ENCODE measurements at regions of chr18 and their contacts with region 1.

Region 1: DNA sequence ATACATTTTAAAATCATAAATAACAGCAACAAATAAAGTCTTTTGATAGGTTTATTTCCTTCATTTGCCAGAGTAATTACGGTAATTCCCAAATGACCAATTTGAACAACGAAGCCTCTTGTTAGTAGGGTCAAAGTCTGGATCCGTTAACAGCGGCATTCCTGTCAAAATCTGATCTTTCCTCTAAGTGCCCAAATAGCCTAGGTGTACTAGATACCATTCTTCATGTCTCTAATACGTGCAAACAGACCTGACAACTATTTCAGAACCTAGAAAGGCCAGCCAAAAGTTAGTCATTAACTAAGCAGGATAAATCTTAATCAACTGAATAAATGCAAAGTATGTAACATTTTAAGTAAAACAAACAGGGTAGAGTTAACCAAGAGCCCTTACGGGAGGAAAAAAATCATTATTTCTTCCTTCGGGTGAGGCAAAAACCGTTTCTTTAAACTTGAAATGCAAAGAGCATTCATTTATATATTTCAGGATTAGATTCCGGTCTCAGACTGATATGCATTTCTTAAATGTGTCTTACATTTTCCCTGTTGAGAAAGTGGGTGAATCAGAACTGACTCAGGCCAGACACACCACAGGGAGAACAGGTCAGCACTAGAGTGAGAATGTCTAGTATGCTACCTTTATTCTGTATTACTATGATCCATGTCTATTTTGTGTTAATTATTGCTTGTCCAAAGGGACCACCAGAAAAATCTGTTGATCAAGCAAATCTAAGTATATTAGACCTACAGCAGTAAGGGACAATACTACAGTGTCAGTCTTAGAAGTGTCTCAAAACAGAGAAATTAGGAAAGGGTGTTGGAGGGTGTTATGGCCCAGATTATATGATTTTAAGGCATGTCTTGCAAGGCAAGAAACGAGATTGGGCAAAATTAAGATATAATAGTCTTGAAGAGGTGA is 141.5 kb upstream of the NDUFV2 start:
- DNase-seq: no peak
- H3K4me3 ChIP-seq: no peak overlapping the region
- H3K27ac ChIP-seq: no peak overlapping the region
- H3K4me1 ChIP-seq: no peaks in the 10 kb centered on the region
- H3K27me3 ChIP-seq: no peaks in the 10 kb centered on the region
- CTCF ChIP-seq: no peak
- POLR2A ChIP-seq: no peak

Region 2: GRCh38 chr18:7803956-7804469 is 1157.0 kb before region 1 on chr18:
- intact Hi-C with region 1: loop called (anchors 5 kb)
- DNase-seq: no peak
- H3K4me3 ChIP-seq: no peak overlapping the region
- H3K27ac ChIP-seq: no peak overlapping the region
- H3K4me1 ChIP-seq: no peaks in the 10 kb centered on the region
- H3K27me3 ChIP-seq: no peaks in the 10 kb centered on the region
- CTCF ChIP-seq: no peak
- POLR2A ChIP-seq: no peak

Region 3: GRCh38 chr18:8264861-8265411 is 696.1 kb before region 1 on chr18:
- intact Hi-C with region 1: no loop called
- DNase-seq: peak in 1 of 2 donors; percentile 67
- H3K4me3 ChIP-seq: no peak overlapping the region
- H3K27ac ChIP-seq: no peak overlapping the region
- H3K4me1 ChIP-seq: no peaks in the 10 kb centered on the region
- H3K27me3 ChIP-seq: no peaks in the 10 kb centered on the region
- CTCF ChIP-seq: no peak
- POLR2A ChIP-seq: no peak

Region 4: DNA sequence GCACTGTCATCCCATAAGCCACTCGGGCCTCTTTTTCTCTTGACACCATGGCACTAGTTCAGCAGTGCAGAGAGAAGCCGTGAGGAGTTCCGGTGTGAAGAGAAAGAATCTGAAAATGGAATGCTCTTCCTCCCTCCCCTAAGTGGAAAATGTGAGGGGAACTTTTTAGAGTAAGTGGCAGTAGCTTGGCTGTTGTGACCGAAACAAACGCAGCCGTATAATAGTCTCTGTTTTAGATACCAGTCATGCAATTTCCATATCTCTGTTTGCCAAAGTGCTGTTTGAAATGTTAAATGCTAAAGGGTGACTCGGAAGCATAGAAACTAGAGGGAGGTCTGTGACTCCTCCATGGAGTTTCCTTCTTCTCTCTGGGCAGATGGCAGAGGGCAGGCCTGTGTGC is 132.7 kb before region 1 on chr18:
- intact Hi-C with region 1: loop called (anchors 10 kb)
- DNase-seq: no peak
- H3K4me3 ChIP-seq: no peak overlapping the region
- H3K27ac ChIP-seq: no peak overlapping the region
- H3K4me1 ChIP-seq: no peaks in the 10 kb centered on the region
- H3K27me3 ChIP-seq: no peaks in the 10 kb centered on the region
- CTCF ChIP-seq: no peak
- POLR2A ChIP-seq: no peak

Region 5: DNA sequence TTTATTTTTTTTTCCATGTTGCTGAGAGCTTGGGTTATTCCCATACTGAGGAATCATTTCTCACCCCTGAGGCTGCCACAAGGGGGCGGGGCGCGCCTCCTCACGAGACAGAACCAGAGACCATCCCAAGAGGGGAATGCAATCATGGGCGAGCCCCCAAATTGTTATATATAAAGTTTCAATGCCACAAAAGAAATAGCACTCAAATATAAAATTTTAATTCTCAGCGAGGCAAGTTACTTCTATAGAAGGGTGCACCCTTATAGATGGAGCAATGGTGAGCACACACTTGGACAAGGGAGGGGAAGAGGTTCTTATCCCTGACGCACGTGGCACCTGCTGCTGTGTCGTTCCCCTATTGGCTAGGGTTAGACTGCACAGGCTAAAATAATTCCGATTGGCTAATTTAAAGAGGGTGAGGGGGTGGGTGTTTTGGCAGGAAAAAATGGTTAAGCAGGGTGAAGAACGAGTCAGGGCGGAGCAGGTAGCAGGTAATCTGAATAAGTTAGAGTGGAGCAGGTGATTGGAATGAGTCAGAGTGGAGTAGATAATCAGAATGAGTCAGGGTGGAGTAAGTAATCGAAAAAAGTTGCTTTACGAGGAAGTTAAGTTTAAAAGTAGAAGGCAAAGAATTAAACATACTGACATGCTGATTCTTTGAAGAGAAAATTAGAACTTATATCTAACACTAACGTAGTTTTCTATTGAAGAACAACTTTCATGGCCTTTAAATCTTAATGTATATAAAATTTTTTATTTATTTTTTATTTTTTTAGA is 78.2 kb before region 1 on chr18:
- intact Hi-C with region 1: no loop called
- DNase-seq: no peak
- H3K4me3 ChIP-seq: no peak overlapping the region
- H3K27ac ChIP-seq: no peak overlapping the region
- H3K4me1 ChIP-seq: no peaks in the 10 kb centered on the region
- H3K27me3 ChIP-seq: no peaks in the 10 kb centered on the region
- CTCF ChIP-seq: no peak
- POLR2A ChIP-seq: no peak

Region 6: DNA sequence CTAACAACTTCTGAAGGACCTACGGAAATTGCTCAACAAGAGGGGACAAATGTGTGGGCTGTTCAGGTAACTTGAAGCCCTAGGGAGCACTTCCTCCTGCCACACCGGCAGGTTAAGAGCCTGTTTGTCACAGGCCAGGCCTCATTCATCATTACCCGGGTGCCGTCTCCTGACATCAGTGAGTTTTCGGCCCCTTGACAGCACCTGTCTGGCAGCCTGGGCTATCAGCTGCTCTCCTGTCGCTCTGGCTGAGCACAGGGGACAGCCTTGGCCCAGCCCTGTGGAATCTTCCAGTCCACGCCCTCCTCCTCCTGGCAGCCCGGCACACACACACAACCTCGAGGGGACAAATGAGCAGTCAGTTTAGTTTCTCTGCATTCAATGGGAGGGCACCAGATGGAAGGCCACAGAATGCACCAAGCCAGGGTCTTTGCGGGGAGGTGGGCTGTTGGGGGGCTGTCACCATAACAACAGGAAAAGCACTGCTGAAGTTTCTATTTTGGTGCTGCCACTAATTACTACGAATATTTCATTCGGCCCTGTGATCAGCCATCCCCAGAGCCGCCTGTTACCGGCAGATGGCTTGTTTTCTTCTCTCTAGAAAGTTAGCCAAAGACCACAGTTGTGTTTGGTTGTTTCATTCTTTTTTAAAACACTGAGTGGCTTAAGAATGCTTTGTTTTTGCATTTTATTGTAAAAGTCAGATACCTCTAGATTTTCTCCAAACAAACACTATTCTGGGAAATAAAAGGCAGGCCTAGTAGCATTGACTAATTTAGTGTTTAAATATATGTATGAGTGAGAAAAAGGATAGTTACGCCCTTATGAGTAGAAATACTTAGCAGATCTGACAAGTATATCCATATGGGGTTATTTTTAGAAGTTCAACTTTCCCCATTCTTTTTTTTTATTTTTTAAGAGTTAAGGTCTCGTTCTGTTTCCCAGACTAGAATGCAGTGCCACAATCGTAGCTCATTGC is 48.4 kb before region 1 on chr18:
- intact Hi-C with region 1: no loop called
- DNase-seq: no peak
- H3K4me3 ChIP-seq: no peak overlapping the region
- H3K27ac ChIP-seq: no peak overlapping the region
- H3K4me1 ChIP-seq: no peaks in the 10 kb centered on the region
- H3K27me3 ChIP-seq: no peaks in the 10 kb centered on the region
- CTCF ChIP-seq: no peak
- POLR2A ChIP-seq: no peak

Region 7: DNA sequence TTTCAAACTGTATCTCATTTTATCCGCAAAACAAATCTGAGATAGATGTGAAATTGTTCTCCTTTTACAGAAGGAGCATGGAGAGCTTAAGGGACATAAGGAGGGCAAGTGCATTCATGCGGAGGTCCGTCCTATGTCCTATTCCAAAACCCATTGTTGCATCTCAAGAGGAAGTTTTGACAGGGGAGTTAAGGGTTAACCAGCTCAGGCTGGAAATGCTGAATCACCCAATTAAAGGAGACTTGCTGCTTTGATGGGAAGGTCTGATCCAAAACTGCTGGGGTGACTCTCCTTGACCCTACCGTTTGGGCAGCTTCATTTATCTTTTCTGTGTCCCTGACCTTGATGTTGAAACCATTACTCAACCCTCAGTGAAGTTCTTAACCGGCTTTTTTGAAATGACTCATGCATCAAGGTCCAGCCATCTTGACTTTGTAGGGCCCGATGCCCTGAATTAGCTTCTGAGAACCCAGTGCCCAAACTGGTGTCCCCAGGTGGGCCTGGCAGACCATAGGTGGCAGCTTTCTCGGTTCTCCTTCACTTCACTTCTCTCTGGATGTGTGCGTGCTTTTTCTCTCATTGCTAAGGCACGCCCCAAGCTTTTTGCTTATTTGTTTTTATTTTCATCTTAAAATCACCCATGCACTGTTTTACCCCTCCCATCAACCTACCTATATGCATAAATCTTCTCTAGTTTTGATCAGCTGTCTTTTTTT is 908.9 kb after region 1 on chr18:
- intact Hi-C with region 1: no loop called
- DNase-seq: no peak
- H3K4me3 ChIP-seq: no peak overlapping the region
- H3K27ac ChIP-seq: peak overlapping the region in 1 of 2 donors; percentile 41
- H3K4me1 ChIP-seq: peaks cover 0 to 4% of the 10 kb centered on the region in 2 donors
- H3K27me3 ChIP-seq: no peaks in the 10 kb centered on the region
- CTCF ChIP-seq: no peak
- POLR2A ChIP-seq: no peak

Measured in breast epithelium (tissue), 4 donors.